Activated CD4-positive, alpha-beta T cell treated with anti-CD3 and anti-CD28 coated beads, Interleukin-2, amount 10 ng/mL, durations not matched to agents 7 days and 5 days (primary cell): ENCODE measurements at regions of chr19 and their contacts with region 1.

Region 1: DNA sequence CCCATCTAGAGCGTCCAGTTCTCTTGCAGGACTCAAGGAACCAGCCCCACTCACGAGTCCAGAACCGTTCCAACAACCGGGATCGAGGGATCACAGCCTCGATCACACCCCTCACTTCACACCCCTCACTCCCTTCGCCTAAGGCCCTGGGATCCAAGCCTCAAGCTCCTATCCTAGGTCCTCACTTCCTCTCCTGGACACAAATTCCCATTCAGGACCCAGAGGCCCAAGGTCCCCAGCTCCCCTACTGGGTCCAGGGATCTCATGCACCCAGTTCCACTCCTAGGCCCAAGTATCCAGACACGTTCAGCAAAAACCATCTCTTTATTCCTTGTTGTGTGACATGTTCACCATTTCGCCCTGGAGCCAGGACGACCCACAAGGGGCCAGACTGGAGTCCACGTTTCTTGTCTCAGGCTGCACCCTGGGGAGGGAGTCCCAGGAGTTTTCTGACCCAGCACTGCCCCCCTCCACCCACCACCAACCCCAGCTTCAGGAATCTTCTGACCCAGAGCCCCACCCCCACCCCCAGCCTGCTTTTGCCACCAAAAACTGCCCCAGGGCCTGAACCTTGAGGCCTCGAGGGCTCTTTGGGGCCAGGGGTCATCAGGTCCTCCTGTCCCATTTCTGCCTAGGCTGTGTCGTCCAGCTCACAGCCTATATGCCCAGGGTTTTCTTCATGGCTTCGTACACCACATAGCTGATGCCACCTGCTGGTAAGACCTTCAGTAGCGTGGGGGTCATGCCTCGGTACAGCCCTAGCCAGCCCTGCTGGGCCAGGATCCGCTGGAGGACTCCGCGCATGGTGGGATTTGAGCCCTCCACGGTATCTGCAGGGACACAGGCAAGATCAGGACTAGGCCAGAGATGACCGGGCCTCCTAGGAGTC is 1.4 kb upstream of the KHSRP start:
- DNase-seq: no peak
- H3K4me3 Mint-ChIP-seq: peak overlapping the region; percentile 73
- H3K27ac Mint-ChIP-seq: peak overlapping the region; percentile 94
- H3K4me1 Mint-ChIP-seq: peaks cover 41% of the 10 kb centered on the region
- H3K27me3 Mint-ChIP-seq: no peaks in the 10 kb centered on the region

Region 2: DNA sequence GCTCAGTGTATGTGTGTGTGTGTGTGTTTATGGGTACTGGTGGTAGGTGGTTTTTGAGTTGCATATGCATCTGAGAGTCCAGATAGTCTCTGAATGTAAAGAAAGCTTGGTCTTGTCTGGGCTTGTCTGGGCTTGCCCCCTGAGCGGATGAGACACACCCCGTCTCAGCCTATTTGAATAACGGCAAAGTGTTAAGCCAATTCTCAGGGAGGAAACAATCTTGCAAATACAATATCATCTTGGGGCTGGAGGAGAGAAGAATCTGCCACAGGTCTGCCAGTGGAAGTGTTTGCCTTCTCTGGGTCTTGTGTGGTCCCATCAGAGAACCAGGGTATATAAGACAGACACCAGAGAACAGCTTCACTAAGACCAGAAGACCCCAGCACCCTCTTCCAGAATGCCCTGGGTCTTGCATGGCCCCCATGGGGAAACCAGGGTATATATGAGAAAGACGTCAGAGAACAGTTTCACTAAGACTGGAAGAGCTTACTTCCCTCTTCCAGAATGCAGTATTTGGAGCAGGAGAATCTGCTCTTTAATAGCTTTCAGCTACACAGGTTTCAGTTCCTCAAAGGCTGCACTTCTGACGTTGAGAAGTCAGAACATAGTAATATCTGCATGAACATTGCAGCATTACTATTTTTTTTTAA is 151.6 kb after region 1 on chr19:
- CTCF ChIA-PET with region 1: no interaction called
- POLR2A ChIA-PET with region 1: interaction called, 10 read pairs
- DNase-seq: peak; percentile 21
- H3K4me3 Mint-ChIP-seq: no peak overlapping the region
- H3K27ac Mint-ChIP-seq: no peak overlapping the region
- H3K4me1 Mint-ChIP-seq: peaks cover 9% of the 10 kb centered on the region
- H3K27me3 Mint-ChIP-seq: peaks cover 4% of the 10 kb centered on the region